Right ventricle myocardium inferior (tissue), 1 donor: ENCODE measurements at regions of chr1 and their contacts with region 1.

Region 1: GRCh38 chr1:205211169-205211838 is at the start of gene DSTYK:
- DNase-seq: peak; percentile 95
- ATAC-seq: peak; percentile 98
- total RNA-seq, gene DSTYK: 5.2 TPM

Region 2: DNA sequence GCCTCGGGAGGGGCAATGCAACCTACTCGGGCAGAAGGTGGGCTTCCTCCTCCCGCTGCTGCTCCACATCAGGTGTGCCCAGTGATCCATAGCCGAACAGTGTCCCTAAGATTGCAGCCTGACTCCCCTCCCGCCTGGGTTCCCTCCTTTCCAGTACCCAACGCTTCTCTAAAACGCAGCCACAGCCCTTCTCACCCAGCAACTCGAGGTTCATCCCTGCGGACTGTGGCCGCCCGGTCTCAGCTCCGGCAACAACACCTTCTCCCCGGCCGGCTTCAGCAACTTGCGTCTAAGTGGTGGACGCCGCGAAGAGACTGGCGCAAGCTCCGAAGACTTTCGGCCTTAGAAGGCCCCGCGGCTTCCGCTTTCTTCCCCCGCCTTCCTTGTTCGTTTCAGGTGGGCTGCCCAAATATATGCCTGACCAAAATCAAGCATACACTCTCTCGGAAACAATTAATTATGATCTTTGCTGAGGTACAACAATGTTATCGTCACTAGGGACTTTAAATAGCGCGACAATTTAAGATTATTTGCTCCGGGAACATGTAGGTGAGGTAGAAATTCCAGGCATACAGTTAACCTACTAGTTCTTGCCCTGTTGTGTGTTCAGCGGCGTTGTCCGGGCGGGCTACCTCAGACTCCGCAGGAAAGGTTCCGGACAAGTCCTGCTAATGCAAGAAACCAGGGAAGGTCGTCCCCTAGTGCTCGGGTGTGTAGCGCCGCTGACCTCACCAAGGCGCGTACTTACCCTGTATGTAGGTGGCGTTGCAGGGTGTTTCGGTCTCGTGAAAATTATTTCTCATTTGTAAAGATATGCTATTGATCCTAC is 89.4 kb before region 1 on chr1 and contains the start of gene RBBP5:
- intact Hi-C with region 1: loop called (anchors 5 kb)
- DNase-seq: peak; percentile 97
- ATAC-seq: peak; percentile 99
- total RNA-seq, gene RBBP5: 10.0 TPM